ENCODE measurements at regions of chr2 and their contacts with region 1.

Region 1: DNA sequence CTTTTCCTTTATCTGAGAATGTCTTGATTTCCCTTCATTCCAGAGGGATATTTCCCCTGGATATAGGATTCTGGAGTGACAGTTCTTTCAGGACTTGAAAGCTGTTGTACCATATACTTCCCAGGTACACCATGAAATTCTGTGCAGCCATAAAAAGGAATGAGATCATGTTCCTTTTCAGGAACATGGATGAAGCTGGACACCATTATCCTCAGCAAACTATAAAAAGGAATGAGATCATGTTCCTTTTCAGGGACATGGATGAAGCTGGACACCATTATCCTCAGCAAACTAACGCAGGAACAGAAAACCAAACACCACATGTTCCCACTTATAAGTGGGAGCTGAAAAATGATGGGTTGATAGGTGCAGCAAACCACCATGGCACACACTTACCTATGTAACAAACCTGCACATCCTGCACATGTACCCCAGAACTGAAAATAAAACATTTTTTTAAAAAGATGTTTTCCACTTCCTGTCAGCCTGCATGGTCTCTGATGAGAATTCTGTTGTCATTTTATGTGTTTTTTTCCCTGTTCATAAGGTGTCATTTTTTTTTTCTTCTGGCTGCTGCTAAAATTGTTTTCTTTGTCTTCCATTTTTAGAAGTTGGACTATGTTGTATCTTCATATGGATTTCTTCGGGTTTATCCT is 133.3 kb downstream of the DNAH6 start:
- DNase-seq: peak in 4 of 5 donors; percentile 11 to 28 (median 18)
- H3K4me3 ChIP-seq: no peak overlapping the region
- H3K4me3 Mint-ChIP-seq: peak overlapping the region in 6 of 8 donors; percentile 14 to 72 (median 31)
- H3K27ac ChIP-seq: no peak overlapping the region
- H3K27ac Mint-ChIP-seq: peak overlapping the region in 6 of 7 donors; percentile 9 to 34 (median 15)
- H3K4me1 ChIP-seq: peaks cover 60% of the 10 kb centered on the region
- H3K4me1 Mint-ChIP-seq: peaks cover 49 to 80% (median 62%) of the 10 kb centered on the region in 4 donors
- H3K27me3 ChIP-seq: no peaks in the 10 kb centered on the region
- H3K27me3 Mint-ChIP-seq: no peaks in the 10 kb centered on the region

Region 2: GRCh38 chr2:84697895-84698294 is 48.3 kb after region 1 on chr2:
- CTCF ChIA-PET with region 1: no interaction called
- POLR2A ChIA-PET with region 1: no interaction called
- intact Hi-C with region 1: loop called (anchors 5 kb)
- DNase-seq: no peak
- H3K4me3 ChIP-seq: no peak overlapping the region
- H3K4me3 Mint-ChIP-seq: no peak overlapping the region
- H3K27ac ChIP-seq: no peak overlapping the region
- H3K27ac Mint-ChIP-seq: peak overlapping the region in 1 of 7 donors; percentile 73
- H3K4me1 ChIP-seq: peaks cover 27% of the 10 kb centered on the region
- H3K4me1 Mint-ChIP-seq: peaks cover 20 to 28% (median 26%) of the 10 kb centered on the region in 4 donors
- H3K27me3 ChIP-seq: no peaks in the 10 kb centered on the region
- H3K27me3 Mint-ChIP-seq: no peaks in the 10 kb centered on the region

Region 3: GRCh38 chr2:85813982-85814801 is 1164.6 kb after region 1 on chr2:
- CTCF ChIA-PET with region 1: no interaction called
- POLR2A ChIA-PET with region 1: no interaction called
- intact Hi-C with region 1: no loop called
- DNase-seq: peak; percentile 64 to 75 (median 69)
- H3K4me3 ChIP-seq: no peak overlapping the region
- H3K4me3 Mint-ChIP-seq: no peak overlapping the region
- H3K27ac ChIP-seq: no peak overlapping the region
- H3K27ac Mint-ChIP-seq: peak overlapping the region in 2 of 7 donors; percentile 4 to 67
- H3K4me1 ChIP-seq: no peaks in the 10 kb centered on the region
- H3K4me1 Mint-ChIP-seq: peaks cover 0 to 2% (median 0%) of the 10 kb centered on the region in 4 donors
- H3K27me3 ChIP-seq: no peaks in the 10 kb centered on the region
- H3K27me3 Mint-ChIP-seq: peaks cover 6 to 10% of the 10 kb centered on the region in 2 donors